GM10248 (cell line): ENCODE measurements at regions of chr7 and their contacts with region 1.

Region 1: DNA sequence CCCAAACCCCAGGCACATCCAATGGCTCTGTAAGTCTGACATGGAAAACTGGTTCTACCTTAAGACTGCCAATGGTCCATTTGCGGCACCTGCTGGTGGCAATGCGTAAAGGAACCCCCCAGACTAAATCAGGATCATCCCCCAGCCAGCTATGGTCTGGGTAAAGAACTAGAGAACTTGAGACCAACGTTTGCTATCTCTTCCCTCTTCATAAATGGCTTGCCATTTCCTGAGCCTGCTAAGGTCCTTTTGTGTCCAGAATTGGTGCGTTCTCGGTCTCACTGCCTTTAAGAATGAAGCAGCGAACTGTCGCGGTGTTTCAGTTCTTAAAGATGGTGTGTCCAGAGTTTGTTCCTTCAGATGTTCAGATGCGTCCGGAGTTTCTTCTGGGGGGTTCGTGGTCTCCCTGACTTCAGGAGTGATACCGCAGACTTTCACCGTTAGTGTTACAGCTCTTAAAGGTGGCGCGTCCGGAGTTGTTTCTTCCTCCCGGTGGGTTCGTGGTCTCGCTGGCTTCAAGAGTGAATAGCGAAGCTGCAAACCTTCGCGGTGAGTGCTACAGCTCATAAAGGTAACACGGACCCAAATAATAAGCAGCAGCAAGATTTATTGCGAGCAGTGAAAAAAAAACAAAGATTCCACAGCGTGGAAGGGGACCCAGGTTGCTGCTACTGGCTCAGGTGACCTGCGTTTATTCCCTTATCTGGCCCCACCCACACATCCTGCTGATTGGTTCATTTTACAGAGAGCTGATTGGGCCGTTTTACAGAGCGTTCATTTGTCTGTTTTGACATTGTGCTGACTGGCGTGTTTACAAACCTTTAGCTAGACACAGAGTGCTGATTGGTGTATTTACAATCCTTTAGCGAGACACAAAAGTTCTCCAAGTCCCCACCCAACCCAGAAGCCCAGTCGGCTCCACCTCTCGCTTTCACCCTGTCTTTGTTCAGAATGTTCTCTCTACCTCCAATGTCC is 95.4 kb downstream of the ELMO1 start:
- DNase-seq: peak; percentile 58
- CTCF ChIP-seq: peak; percentile 86

Region 2: DNA sequence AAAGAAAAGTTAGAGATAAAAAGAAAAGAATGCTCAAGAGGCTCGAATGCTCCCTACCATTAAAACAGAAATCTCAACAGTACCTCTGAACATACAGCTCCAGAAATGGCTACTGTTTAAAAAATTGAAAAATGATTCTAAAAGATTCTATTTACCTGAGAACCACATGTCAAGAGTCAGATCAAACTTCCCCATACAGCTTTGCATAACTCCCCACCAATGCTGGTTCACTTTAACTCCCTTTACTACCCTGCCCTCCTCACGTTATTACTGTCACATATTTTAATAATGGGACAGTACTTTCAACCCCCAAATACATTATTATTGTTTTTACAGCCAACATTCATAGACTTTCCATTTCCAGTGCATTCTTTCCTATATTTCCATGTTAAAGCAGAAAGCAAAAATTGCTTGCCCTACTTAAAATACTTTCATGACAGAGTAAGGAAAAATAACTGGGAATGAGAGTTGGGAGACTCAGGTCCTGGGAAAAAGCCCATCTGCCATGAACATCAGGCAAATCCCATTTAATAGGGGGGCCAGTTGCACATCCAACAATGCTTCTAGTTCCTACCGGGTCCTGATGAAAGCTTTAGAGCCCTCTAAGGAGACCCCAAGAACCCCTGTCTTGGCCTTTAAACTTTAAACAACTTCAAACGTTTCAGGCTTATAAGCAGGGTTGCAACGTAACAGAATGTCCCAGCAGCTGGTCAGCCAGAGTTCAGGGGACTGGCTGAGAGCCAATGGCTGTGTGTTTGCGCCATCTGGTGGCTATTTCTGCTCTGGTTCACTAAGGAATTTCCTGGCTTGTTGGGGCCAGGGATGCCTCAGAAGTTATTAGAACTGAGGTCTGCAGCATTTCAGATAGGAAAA is 152.0 kb before region 1 on chr7:
- CTCF ChIA-PET with region 1: interaction called, 29 read pairs
- POLR2A ChIA-PET with region 1: no interaction called
- DNase-seq: peak; percentile 65
- CTCF ChIP-seq: peak; percentile 88

Region 3: GRCh38 chr7:37234928-37235327 is 118.3 kb before region 1 on chr7:
- CTCF ChIA-PET with region 1: interaction called, 33 read pairs
- POLR2A ChIA-PET with region 1: no interaction called
- DNase-seq: no peak
- CTCF ChIP-seq: peak; percentile 36

Region 4: DNA sequence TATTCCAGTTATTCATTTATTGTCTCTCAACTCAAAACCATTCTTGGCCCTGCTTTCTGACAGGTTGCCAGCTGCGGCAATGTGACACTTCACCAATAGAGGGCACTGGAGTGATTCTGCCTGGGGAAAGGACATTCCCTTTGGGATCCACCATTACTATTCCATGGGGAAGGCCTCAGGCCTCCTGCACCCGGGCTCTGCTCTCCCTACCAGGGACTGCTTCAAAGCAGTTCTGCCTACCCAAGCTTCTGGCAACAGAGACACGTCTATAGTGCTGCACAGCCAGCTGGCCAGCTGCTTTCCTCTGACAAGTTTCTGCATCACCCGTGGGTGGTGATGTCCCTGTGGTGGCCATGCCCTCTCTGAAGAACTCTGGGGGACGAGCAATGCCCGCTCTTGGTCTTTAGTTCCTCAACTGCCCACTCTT is 68.4 kb before region 1 on chr7:
- CTCF ChIA-PET with region 1: interaction called, 86 read pairs
- POLR2A ChIA-PET with region 1: no interaction called
- DNase-seq: peak; percentile 52
- CTCF ChIP-seq: peak; percentile 88

Region 5: GRCh38 chr7:37342688-37343471 is 10.4 kb before region 1 on chr7:
- CTCF ChIA-PET with region 1: interaction called, 55 read pairs
- POLR2A ChIA-PET with region 1: interaction called, 5 read pairs
- DNase-seq: peak; percentile 56
- CTCF ChIP-seq: peak; percentile 45

Region 6: GRCh38 chr7:37391791-37392672 is 38.8 kb after region 1 on chr7:
- CTCF ChIA-PET with region 1: no interaction called
- POLR2A ChIA-PET with region 1: no interaction called
- DNase-seq: no peak
- CTCF ChIP-seq: no peak